ENCODE measurements at regions of chr7 and their contacts with region 1.

Region 1: DNA sequence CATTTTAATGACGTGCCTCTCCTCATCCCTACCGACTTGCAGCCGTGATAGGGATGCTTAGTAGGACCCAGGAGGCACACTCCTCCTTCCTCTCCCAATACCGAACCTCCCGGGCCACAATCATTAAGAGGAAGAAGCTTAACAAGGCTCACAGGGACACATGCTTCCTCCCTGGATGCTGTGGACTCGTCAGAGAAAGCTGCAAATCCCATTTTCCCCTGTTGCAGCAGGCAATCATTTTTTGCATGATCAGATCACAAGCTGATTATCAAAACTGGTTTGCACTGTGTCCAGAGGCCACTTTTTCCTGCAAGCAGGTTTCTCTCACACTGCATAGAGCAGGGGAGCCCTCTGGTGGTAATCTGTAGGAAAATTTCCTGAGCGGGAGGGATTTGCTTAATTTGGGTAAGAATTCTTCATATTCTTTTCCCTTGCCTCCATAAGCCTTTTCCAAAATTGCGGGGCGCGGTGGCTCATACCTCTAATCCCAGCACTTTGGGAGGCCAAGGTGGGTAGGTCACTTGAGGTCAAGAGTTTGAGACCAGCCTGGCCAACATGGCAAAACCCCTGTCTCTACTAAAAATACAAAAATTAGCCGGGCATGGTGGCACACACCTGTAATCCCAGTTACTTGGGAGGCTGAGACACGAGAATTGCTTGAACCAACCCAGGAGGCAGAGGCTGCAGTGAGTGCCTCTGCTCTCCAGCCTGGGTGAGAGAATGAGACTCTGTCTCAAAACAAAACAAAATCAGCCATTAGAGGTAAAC is 16.1 kb upstream of the LAMB4 start:
- DNase-seq: peak in 1 of 2 donors; percentile 75
- ATAC-seq: peak; percentile 85 to 92 (median 87)
- H3K4me3 ChIP-seq: peak overlapping the region in 5 of 10 donors; percentile 16 to 44 (median 31)
- H3K27ac ChIP-seq: peak overlapping the region in 1 of 10 donors; percentile 49
- H3K4me1 ChIP-seq: peaks cover 0 to 12% (median 0%) of the 10 kb centered on the region in 9 donors
- H3K27me3 ChIP-seq: peaks cover 0 to 10% (median 0%) of the 10 kb centered on the region in 7 donors
- CTCF ChIP-seq: peak; percentile 88 to 97 (median 92)

Region 2: DNA sequence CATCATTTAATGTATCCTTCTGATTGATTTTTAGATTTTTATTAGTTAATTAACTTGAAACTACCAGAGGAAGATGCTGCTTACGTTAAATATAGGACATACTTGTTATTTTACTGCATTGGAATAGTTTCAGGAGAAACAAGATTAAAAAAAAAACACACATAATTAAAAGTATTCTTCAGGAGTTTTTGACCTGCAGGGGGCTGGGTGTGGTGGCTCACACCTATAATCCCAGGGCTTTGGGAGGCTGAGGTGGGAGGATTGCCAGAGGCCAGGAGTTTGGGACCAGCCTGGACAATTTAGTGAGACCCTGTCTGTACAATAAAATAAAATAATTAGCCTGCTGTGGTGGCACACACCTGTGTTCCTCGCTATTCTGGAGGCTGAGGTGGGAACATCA is 391.6 kb before region 1 on chr7:
- intact Hi-C with region 1: loop called in 6 of 10 experiments (anchors 5 to 10 kb)
- DNase-seq: no peak
- ATAC-seq: no peak
- H3K4me3 ChIP-seq: no peak overlapping the region
- H3K27ac ChIP-seq: no peak overlapping the region
- H3K4me1 ChIP-seq: no peaks in the 10 kb centered on the region
- H3K27me3 ChIP-seq: no peaks in the 10 kb centered on the region
- CTCF ChIP-seq: no peak

Region 3: GRCh38 chr7:107890962-107891635 is 255.2 kb before region 1 on chr7 and contains the start of gene DLD:
- intact Hi-C with region 1: loop called in 4 of 10 experiments (anchors 10 kb)
- DNase-seq: peak; percentile 95
- ATAC-seq: peak; percentile 98 to 100 (median 99)
- H3K4me3 ChIP-seq: peak within 1 kb of the TSS; percentile 50 to 78 (median 68)
- H3K27ac ChIP-seq: peak within 1 kb of the TSS; percentile 81 to 97 (median 97)
- H3K4me1 ChIP-seq: peaks cover 13 to 52% (median 47%) of the 10 kb centered on the region in 9 donors
- H3K27me3 ChIP-seq: no peaks in the 10 kb centered on the region
- CTCF ChIP-seq: peak in 1 of 9 donors; percentile 6
- total RNA-seq, gene DLD: 257 to 402 (median 353) TPM

Region 4: DNA sequence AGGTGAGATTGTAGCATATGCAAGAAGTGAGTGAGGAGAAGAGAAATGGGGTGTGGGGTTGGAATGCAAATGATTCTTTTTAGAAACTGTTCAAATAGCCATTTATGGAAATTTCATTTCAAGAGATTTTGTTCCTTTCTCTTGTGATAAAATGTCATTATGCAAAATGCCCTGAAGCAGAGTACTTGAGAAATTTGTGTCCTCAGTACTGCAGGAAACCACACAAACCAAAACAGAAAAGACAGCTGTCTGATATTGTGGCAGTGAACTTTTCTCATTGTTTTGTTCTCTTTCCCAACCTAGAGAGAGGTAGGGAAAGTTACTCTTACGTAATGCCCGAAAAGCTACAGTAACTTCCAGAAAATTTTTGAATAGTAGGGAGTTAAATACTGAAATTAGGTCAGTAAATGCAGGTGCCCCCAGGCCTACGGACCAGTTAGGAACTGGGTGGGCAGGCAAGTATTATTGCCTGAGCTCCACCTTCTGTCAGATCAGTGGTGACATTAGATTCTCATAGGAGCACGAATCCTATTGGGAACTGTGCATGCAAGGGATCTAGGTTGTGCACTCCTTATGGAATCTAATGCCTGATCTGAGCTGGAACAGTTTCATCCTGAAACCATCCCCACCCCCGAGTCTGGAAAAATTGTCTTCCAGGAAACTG is 221.3 kb before region 1 on chr7:
- intact Hi-C with region 1: loop called in 2 of 10 experiments (anchors 5 to 10 kb)
- DNase-seq: no peak
- ATAC-seq: peak in 2 of 8 donors; percentile 3 to 19
- H3K4me3 ChIP-seq: no peak overlapping the region
- H3K27ac ChIP-seq: peak overlapping the region in 1 of 10 donors; percentile 6
- H3K4me1 ChIP-seq: peaks cover 0 to 38% (median 10%) of the 10 kb centered on the region in 9 donors
- H3K27me3 ChIP-seq: no peaks in the 10 kb centered on the region
- CTCF ChIP-seq: no peak

Region 5: GRCh38 chr7:108016841-108017775 is 129.1 kb before region 1 on chr7:
- intact Hi-C with region 1: loop called in 2 of 10 experiments (anchors 10 kb)
- DNase-seq: no peak
- ATAC-seq: peak in 6 of 8 donors; percentile 37 to 71 (median 51)
- H3K4me3 ChIP-seq: no peak overlapping the region
- H3K27ac ChIP-seq: no peak overlapping the region
- H3K4me1 ChIP-seq: peaks cover 0 to 19% (median 4%) of the 10 kb centered on the region in 9 donors
- H3K27me3 ChIP-seq: no peaks in the 10 kb centered on the region
- CTCF ChIP-seq: peak in 8 of 9 donors; percentile 23 to 66 (median 54)

Region 6: DNA sequence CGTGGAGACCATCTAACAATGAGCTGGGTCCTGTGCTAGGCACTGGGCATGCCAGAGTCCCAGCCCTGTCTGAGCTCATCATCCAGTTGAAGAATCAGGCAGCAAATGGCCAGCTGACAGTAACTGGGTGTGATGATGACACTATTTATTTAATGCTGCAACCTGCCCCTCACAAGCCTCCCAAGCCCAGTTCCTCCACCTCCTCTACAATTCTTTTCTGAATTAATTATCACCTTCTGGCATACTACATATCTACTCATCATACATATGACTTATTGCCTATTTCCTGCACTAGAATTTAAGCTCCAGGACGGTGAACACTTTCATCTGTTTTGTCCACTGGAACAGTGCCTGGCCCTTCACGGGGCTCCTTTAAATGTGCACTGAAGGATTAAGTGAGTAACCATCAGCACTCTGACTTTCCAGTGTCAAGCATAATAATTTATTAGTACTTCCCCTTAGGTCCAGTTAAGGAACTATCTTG is 80.6 kb after region 1 on chr7:
- intact Hi-C with region 1: no loop called
- DNase-seq: no peak
- ATAC-seq: no peak
- H3K4me3 ChIP-seq: no peak overlapping the region
- H3K27ac ChIP-seq: no peak overlapping the region
- H3K4me1 ChIP-seq: no peaks in the 10 kb centered on the region
- H3K27me3 ChIP-seq: no peaks in the 10 kb centered on the region
- CTCF ChIP-seq: no peak

Measured in heart right ventricle (tissue), 16 donors.